Left cardiac atrium (tissue), 4 donors: ENCODE measurements at regions of chr2 and their contacts with region 1.

Region 1: DNA sequence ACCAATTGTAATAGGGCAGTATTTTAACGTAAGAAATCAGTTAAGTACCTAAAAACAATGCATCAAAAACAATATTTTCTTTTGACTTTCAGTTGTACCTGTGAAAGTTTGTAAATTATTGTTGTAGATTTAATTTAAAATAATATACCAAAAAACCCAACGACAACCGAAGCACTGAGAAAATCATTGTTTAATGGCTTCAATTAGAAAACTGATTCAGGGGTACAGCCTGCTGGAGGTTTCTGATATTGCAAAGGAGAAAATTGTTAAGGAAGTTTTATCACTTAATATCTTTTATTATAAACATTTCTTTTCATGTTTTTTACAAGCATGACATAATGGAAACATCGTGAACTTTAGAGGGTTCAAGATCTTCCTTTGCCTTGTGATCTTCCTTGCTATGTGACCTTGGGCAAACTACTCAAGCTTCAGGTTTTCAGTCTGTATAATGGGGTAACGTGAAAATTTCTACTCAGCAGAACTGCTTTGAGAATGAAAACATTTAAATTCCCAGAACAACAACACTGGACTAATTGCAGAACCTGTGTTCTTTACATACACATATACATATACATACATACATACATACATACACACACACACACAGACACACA is 76.3 kb upstream of the GLS start:
- DNase-seq: no peak
- ATAC-seq: peak in 1 of 2 donors; percentile 22

Region 2: GRCh38 chr2:190343500-190344275 is 460.6 kb before region 1 on chr2 and contains the start of gene INPP1:
- intact Hi-C with region 1: loop called in 1 of 2 experiments (anchors 10 kb)
- DNase-seq: peak; percentile 89
- ATAC-seq: peak; percentile 91 to 95
- total RNA-seq, gene INPP1: 29.9 to 43.6 TPM

Region 3: GRCh38 chr2:190528521-190529001 is 275.7 kb before region 1 on chr2:
- intact Hi-C with region 1: loop called in 1 of 2 experiments (anchors 10 kb)
- DNase-seq: no peak
- ATAC-seq: peak in 1 of 2 donors; percentile 16

Region 4: DNA sequence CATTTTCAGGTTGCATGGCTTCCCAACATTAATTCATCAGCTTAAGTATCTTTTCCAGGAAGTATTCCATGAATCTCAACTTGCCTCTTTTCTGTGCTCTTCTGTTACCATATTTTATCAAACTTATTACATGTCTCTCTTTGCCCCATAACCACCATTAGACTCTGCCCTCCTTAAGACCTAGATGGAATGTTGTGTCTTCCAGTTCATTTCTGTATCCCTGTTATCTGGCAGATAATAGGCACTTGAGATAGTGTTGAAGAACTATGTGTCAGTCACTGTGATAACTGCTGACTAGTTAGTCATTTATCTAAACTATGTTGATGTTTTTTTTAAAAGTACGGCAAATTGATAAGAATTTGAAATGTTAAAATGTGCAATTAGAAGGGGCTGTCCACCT is 118.1 kb after region 1 on chr2:
- intact Hi-C with region 1: no loop called
- DNase-seq: no peak
- ATAC-seq: peak in 1 of 2 donors; percentile 80